Esophagus muscularis mucosa (tissue), 4 donors: ENCODE measurements at regions of chr14 and their contacts with region 1.

Region 1: DNA sequence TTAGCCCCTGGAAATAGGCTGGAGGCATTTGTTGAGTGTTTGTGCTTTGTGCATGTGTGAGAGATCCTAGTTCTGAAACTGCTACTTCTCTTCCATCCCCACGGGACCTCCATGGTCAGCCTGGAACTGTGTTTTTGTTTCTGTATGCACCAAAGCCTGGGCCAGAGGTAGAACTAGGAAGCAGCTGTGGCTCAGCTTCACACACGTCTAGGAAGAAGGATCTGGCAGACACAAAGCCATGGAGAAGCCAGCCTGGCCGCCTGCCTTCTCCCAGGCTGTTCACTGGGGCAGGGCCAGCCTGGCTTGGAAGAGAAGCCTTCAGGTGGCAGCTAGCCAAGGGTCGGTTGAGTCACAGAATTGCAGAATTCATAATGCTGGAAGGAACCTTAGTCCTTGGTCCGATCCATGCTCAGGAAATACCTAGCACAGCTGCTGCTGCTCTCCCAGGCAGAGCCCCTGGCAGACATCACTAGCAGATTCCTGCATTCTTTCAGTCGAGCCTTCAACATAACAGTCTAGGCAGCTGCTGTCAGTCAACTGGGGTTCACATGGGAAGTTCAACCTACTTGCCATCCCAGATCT is 27.0 kb downstream of the RIN3 start:
- DNase-seq: peak; percentile 97
- H3K4me3 ChIP-seq: no peak overlapping the region
- H3K27ac ChIP-seq: peak overlapping the region; percentile 64 to 83 (median 76)
- H3K4me1 ChIP-seq: peaks cover 29 to 45% (median 34%) of the 10 kb centered on the region in 4 donors
- H3K27me3 ChIP-seq: no peaks in the 10 kb centered on the region
- CTCF ChIP-seq: no peak
- EP300 ChIP-seq: no peak
- POLR2A ChIP-seq: no peak

Region 2: GRCh38 chr14:92585981-92586937 is 45.7 kb after region 1 on chr14:
- intact Hi-C with region 1: loop called (anchors 5 kb)
- DNase-seq: no peak
- H3K4me3 ChIP-seq: no peak overlapping the region
- H3K27ac ChIP-seq: peak overlapping the region; percentile 39 to 79 (median 66)
- H3K4me1 ChIP-seq: peaks cover 25 to 48% (median 34%) of the 10 kb centered on the region in 4 donors
- H3K27me3 ChIP-seq: no peaks in the 10 kb centered on the region
- CTCF ChIP-seq: no peak
- EP300 ChIP-seq: no peak
- POLR2A ChIP-seq: no peak

Region 3: DNA sequence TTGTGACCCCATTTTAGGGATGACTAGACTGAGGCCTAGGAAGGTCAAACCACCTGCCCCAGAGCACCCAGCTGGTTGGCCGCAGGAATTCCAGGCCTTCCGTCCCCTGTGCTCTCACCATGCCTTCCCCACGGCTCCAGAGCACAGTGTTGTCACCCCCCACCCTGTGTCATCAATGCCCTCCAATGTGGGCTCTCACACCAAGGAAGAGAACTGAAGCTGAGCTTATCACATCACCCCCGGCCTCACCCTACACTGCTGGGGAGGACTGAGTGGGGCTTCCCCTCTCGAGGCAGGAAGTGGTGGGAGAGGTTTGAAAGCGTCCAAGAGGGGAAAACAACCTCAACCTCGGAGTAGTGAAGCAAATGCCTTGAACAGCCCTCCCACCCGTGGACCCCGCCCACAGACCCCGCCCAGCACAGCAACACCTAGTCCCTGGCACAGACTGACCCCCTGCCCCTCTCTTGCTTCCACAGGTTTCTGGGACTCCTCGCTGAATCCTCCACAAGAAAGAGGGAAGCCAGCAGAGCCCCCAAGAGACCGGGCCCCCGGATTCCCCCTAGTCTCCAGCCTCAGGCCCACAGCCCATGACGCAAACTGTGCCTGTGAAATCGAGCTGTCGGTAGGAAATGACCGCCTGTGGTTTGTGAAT is 110.7 kb after region 1 on chr14:
- intact Hi-C with region 1: no loop called
- DNase-seq: no peak
- H3K4me3 ChIP-seq: peak overlapping the region in 2 of 4 donors; percentile 37 to 50
- H3K27ac ChIP-seq: peak overlapping the region; percentile 87 to 94 (median 92)
- H3K4me1 ChIP-seq: peaks cover 6 to 57% (median 50%) of the 10 kb centered on the region in 4 donors
- H3K27me3 ChIP-seq: no peaks in the 10 kb centered on the region
- CTCF ChIP-seq: no peak
- EP300 ChIP-seq: no peak
- POLR2A ChIP-seq: no peak